ENCODE measurements at regions of chr11 and their contacts with region 1.

Region 1: GRCh38 chr11:11157185-11157584 is 195.9 kb downstream of the CSNK2A3 start:
- DNase-seq: peak; percentile 50 to 84 (median 70)
- ATAC-seq: peak; percentile 67
- H3K4me3 ChIP-seq: no peak overlapping the region
- H3K4me3 Mint-ChIP-seq: peak overlapping the region; percentile 71
- H3K27ac ChIP-seq: no peak overlapping the region
- H3K27ac Mint-ChIP-seq: peak overlapping the region; percentile 92
- H3K4me1 ChIP-seq: peaks cover 33% of the 10 kb centered on the region
- H3K4me1 Mint-ChIP-seq: peaks cover 48% of the 10 kb centered on the region
- H3K27me3 ChIP-seq: no peaks in the 10 kb centered on the region
- H3K27me3 Mint-ChIP-seq: peaks cover 4% of the 10 kb centered on the region
- CTCF ChIP-seq: peak; percentile 80

Region 2: DNA sequence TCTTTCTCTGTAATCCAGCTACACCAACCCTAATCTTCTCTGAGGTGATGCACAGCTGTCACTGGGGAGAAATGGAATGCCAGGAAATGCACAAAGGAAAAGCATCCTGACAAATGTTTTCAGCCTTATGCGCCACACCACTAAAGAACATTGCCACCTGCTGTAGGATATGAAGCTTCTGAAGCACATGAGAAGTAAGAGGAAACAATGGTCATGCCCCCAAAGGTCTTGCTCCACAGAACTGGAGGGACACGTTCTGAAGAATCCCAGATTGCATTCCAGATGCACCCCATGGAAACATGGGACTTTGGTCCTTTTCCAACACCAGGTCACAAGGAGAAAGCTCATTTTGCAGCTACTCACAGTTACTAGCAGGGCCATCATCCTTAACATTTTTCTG is 250.7 kb before region 1 on chr11:
- CTCF ChIA-PET with region 1: no interaction called
- POLR2A ChIA-PET with region 1: no interaction called
- intact Hi-C with region 1: no loop called
- DNase-seq: no peak
- ATAC-seq: no peak
- H3K4me3 ChIP-seq: no peak overlapping the region
- H3K4me3 Mint-ChIP-seq: no peak overlapping the region
- H3K27ac ChIP-seq: no peak overlapping the region
- H3K27ac Mint-ChIP-seq: no peak overlapping the region
- H3K4me1 ChIP-seq: no peaks in the 10 kb centered on the region
- H3K4me1 Mint-ChIP-seq: no peaks in the 10 kb centered on the region
- H3K27me3 ChIP-seq: no peaks in the 10 kb centered on the region
- H3K27me3 Mint-ChIP-seq: peaks cover 5% of the 10 kb centered on the region
- CTCF ChIP-seq: no peak

Region 3: GRCh38 chr11:10933455-10934292 is 223.5 kb before region 1 on chr11:
- CTCF ChIA-PET with region 1: interaction called, 8 read pairs
- POLR2A ChIA-PET with region 1: no interaction called
- intact Hi-C with region 1: loop called (anchors 2 to 5 kb)
- DNase-seq: peak; percentile 67 to 90 (median 80)
- ATAC-seq: peak; percentile 89
- H3K4me3 ChIP-seq: peak overlapping the region; percentile 56
- H3K4me3 Mint-ChIP-seq: peak overlapping the region; percentile 90
- H3K27ac ChIP-seq: no peak overlapping the region
- H3K27ac Mint-ChIP-seq: peak overlapping the region; percentile 52
- H3K4me1 ChIP-seq: peaks cover 24% of the 10 kb centered on the region
- H3K4me1 Mint-ChIP-seq: peaks cover 24% of the 10 kb centered on the region
- H3K27me3 ChIP-seq: peaks cover 25 to 31% of the 10 kb centered on the region in 2 experiments
- H3K27me3 Mint-ChIP-seq: peaks cover 49% of the 10 kb centered on the region
- CTCF ChIP-seq: peak; percentile 94

Region 4: GRCh38 chr11:11036848-11037732 is 120.1 kb before region 1 on chr11:
- CTCF ChIA-PET with region 1: interaction called, 54 read pairs
- POLR2A ChIA-PET with region 1: interaction called, 13 read pairs
- intact Hi-C with region 1: loop called (anchors 1 to 2 kb)
- DNase-seq: peak in 8 of 14 experiments; percentile 11 to 86 (median 35)
- ATAC-seq: peak; percentile 93
- H3K4me3 ChIP-seq: no peak overlapping the region
- H3K4me3 Mint-ChIP-seq: no peak overlapping the region
- H3K27ac ChIP-seq: no peak overlapping the region
- H3K27ac Mint-ChIP-seq: peak overlapping the region; percentile 78
- H3K4me1 ChIP-seq: peaks cover 14% of the 10 kb centered on the region
- H3K4me1 Mint-ChIP-seq: peaks cover 22% of the 10 kb centered on the region
- H3K27me3 ChIP-seq: no peaks in the 10 kb centered on the region
- H3K27me3 Mint-ChIP-seq: no peaks in the 10 kb centered on the region
- CTCF ChIP-seq: peak; percentile 62

Region 5: DNA sequence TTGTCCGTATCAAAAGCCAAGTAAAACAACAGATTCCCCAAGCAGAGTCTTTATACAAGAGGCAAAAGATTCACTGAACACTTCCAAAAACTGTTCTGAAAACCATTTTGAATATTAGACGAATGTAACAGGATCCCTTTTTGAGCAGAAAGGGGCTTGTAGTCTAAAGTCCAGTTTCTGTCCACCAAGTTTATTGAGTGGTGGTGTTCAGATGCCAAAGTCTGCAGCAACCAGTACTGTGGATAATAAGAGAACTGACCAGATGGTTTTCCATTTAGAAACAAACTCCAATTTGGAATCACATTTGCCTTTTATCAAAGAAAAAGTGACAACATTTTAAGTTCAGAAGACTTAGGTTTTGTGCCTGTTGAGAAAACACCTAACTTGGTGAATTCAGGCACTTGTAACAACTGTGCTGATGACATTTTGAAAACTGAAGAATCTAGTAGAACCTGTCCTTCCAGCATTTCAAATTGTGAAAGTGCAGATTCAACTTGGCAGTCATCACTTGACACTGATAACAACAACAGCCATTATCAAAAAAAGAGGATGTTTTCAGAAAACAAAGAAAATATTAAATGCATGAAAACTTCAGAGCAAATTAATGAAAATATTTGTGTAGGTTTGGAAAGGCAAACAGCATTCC is 21.2 kb before region 1 on chr11:
- CTCF ChIA-PET with region 1: interaction called, 14 read pairs
- POLR2A ChIA-PET with region 1: no interaction called
- intact Hi-C with region 1: loop called in 1 of 2 experiments (anchors 2 kb)
- DNase-seq: no peak
- ATAC-seq: no peak
- H3K4me3 ChIP-seq: no peak overlapping the region
- H3K4me3 Mint-ChIP-seq: no peak overlapping the region
- H3K27ac ChIP-seq: no peak overlapping the region
- H3K27ac Mint-ChIP-seq: no peak overlapping the region
- H3K4me1 ChIP-seq: peaks cover 5% of the 10 kb centered on the region
- H3K4me1 Mint-ChIP-seq: peaks cover 38% of the 10 kb centered on the region
- H3K27me3 ChIP-seq: no peaks in the 10 kb centered on the region
- H3K27me3 Mint-ChIP-seq: no peaks in the 10 kb centered on the region
- CTCF ChIP-seq: no peak

Region 6: DNA sequence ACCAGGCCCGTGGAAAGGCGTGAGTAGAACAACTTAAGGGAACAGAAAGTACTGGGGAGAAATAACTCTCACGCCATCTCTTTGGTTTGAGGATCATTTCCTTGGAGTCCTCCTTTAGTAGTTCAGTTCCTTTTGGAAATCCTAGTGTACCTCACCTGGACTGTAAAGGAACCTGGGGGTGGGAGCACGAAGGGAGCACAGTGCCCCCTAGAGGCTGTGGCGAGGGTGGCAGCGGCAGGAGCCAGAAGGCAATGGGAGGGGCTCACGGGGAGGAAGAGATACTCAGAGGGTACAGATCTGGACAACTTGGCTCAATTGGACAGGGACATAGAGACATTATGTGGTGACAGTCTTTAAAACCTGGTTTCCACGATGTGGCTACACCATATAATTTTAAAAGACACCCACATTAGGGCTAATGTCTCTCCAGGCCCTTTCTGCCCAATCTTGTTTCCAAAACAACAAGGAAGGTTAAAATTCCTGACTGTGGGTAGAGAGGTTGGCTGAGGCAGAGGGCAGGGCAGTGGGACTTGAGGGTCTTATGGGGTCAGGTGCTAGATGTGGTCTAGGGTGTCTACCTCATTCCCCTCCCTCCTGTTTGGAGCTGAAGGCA is 108.9 kb after region 1 on chr11:
- CTCF ChIA-PET with region 1: no interaction called
- POLR2A ChIA-PET with region 1: no interaction called
- intact Hi-C with region 1: loop called in 1 of 2 experiments (anchors 5 kb)
- DNase-seq: peak; percentile 29 to 73 (median 50)
- ATAC-seq: peak; percentile 63
- H3K4me3 ChIP-seq: no peak overlapping the region
- H3K4me3 Mint-ChIP-seq: no peak overlapping the region
- H3K27ac ChIP-seq: no peak overlapping the region
- H3K27ac Mint-ChIP-seq: no peak overlapping the region
- H3K4me1 ChIP-seq: no peaks in the 10 kb centered on the region
- H3K4me1 Mint-ChIP-seq: no peaks in the 10 kb centered on the region
- H3K27me3 ChIP-seq: no peaks in the 10 kb centered on the region
- H3K27me3 Mint-ChIP-seq: peaks cover 2% of the 10 kb centered on the region
- CTCF ChIP-seq: peak; percentile 60

Region 7: GRCh38 chr11:11555208-11555607 is 398.0 kb after region 1 on chr11:
- CTCF ChIA-PET with region 1: no interaction called
- POLR2A ChIA-PET with region 1: no interaction called
- intact Hi-C with region 1: no loop called
- DNase-seq: no peak
- ATAC-seq: no peak
- H3K4me3 ChIP-seq: no peak overlapping the region
- H3K4me3 Mint-ChIP-seq: no peak overlapping the region
- H3K27ac ChIP-seq: no peak overlapping the region
- H3K27ac Mint-ChIP-seq: no peak overlapping the region
- H3K4me1 ChIP-seq: no peaks in the 10 kb centered on the region
- H3K4me1 Mint-ChIP-seq: no peaks in the 10 kb centered on the region
- H3K27me3 ChIP-seq: peaks cover 3% of the 10 kb centered on the region in 2 experiments
- H3K27me3 Mint-ChIP-seq: peaks cover 6% of the 10 kb centered on the region
- CTCF ChIP-seq: no peak

Region 8: GRCh38 chr11:11787305-11788062 is 630.3 kb after region 1 on chr11:
- CTCF ChIA-PET with region 1: no interaction called
- POLR2A ChIA-PET with region 1: no interaction called
- intact Hi-C with region 1: loop called (anchors 5 kb)
- DNase-seq: peak; percentile 54 to 83 (median 65)
- ATAC-seq: peak; percentile 88
- H3K4me3 ChIP-seq: no peak overlapping the region
- H3K4me3 Mint-ChIP-seq: no peak overlapping the region
- H3K27ac ChIP-seq: no peak overlapping the region
- H3K27ac Mint-ChIP-seq: no peak overlapping the region
- H3K4me1 ChIP-seq: no peaks in the 10 kb centered on the region
- H3K4me1 Mint-ChIP-seq: no peaks in the 10 kb centered on the region
- H3K27me3 ChIP-seq: no peaks in the 10 kb centered on the region
- H3K27me3 Mint-ChIP-seq: peaks cover 6% of the 10 kb centered on the region
- CTCF ChIP-seq: peak; percentile 92

Measured in CD4-positive, alpha-beta T cell (primary cell).